Activated CD4-positive, alpha-beta memory T cell treated with anti-CD3 and anti-CD28 coated beads, Interleukin-2, amount 10 ng/mL, durations not matched to agents 7 days and 5 days (primary cell): ENCODE measurements at regions of chr1 and their contacts with region 1.

Region 1: GRCh38 chr1:165842671-165843129 is 15.3 kb downstream of the UCK2 start:
- DNase-seq: peak; percentile 41
- H3K4me3 Mint-ChIP-seq: peak overlapping the region; percentile 9
- H3K27ac Mint-ChIP-seq: peak overlapping the region; percentile 31
- H3K4me1 Mint-ChIP-seq: peaks cover 62% of the 10 kb centered on the region
- H3K27me3 Mint-ChIP-seq: no peaks in the 10 kb centered on the region

Region 2: DNA sequence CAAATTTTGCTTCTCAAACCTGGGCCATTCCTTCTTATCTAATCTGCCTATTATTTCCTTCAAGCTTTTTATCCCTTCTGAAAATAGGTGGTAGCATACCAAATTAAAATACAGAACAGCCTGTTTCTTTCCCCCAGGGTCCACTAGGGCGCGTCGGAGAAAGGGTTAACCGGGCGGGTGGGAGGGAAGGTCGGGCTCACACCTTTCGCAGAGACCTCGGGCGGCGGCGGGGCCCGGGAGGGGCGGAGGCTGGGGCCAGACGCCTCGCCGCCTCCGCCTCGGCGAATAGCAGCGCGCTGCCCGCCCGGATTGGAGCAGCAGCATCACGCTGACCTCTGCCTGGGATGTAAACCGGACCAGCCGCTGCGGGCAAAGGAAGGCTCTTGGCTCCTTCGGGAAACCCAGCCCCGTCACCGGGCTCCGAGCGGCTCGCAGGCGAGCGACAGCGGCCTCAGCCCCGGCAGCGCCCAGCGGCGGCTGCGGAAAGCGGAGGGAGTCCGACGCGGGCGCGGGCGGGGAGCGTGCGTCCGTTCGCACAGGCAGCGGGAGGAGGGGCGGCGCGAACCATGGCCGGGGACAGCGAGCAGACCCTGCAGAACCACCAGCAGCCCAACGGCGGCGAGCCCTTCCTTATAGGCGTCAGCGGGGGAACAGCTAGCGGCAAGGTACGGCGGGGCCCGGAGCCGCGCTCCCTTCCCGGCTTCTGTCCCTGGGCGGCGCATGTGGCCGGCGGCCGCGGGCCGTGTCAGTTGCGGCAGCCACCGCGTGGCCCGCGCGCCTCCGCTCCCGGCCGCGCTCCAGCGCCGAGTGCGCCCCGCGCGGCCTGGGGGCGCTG is 15.2 kb before region 1 on chr1 and contains the start of gene UCK2:
- CTCF ChIA-PET with region 1: interaction called, 12 read pairs
- POLR2A ChIA-PET with region 1: interaction called, 17 read pairs
- DNase-seq: peak; percentile 63
- H3K4me3 Mint-ChIP-seq: peak within 1 kb of the TSS; percentile 90
- H3K27ac Mint-ChIP-seq: peak within 1 kb of the TSS; percentile 83
- H3K4me1 Mint-ChIP-seq: peaks cover 26% of the 10 kb centered on the region
- H3K27me3 Mint-ChIP-seq: no peaks in the 10 kb centered on the region
- total RNA-seq, gene UCK2: 32.1 to 34.4 TPM